Heart right ventricle (tissue), 16 donors: ENCODE measurements at regions of chr14 and their contacts with region 1.

Region 1: DNA sequence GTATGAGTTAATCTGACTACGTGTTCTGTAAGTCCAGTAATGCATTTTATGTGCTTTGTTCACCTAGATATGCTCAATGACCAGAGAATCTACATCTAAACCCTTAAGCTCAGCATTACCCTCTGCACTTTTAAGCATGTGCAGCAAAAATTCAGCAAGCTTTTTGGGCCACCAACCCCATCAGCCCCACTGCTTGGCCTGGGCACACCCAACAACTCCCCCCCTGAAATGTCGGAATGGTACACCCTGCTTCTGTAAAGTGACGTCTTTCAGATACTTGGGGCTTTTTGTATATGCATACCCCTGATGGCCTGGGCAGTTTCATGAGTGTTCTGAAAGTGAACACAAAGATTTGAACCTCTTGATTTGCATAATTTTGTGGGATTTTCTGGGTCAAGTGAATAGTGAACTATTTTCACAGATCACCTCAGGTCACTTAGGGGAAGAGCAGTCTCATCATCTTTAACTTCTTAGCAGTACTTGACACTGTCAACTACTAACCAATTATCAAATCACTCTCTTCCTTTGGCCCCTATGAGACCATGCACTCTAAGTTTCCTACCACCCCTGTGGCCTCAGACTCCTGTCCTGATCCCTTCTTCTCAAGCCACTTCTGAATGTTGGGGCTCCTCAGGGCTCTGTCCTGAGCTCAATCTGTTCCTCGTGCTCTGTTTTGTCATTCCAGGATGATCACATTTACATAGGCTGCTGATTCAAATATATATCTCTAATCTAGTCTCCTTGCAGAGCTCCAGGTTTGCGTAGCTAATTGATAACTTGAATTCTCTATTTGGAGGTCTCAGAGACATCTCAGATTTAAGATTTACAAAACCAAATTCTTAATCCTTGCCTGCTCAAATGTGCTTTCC is 36.3 kb upstream of the PPM1A start:
- DNase-seq: no peak
- ATAC-seq: no peak
- H3K4me3 ChIP-seq: no peak overlapping the region
- H3K27ac ChIP-seq: no peak overlapping the region
- H3K4me1 ChIP-seq: peaks cover 0 to 16% (median 3%) of the 10 kb centered on the region in 9 donors
- H3K27me3 ChIP-seq: no peaks in the 10 kb centered on the region
- CTCF ChIP-seq: no peak

Region 2: GRCh38 chr14:60331201-60332045 is 118.7 kb after region 1 on chr14:
- intact Hi-C with region 1: loop called in 1 of 10 experiments (anchors 10 kb)
- DNase-seq: peak; percentile 49 to 52
- ATAC-seq: peak; percentile 55 to 89 (median 76)
- H3K4me3 ChIP-seq: peak overlapping the region in 9 of 10 donors; percentile 28 to 58 (median 46)
- H3K27ac ChIP-seq: peak overlapping the region in 4 of 10 donors; percentile 9 to 45 (median 22)
- H3K4me1 ChIP-seq: peaks cover 3 to 22% (median 9%) of the 10 kb centered on the region in 9 donors
- H3K27me3 ChIP-seq: peaks cover 0 to 42% (median 16%) of the 10 kb centered on the region in 7 donors
- CTCF ChIP-seq: peak; percentile 37 to 86 (median 70)